HepG2 (cell line): ENCODE measurements at regions of chr10 and their contacts with region 1.

Region 1: GRCh38 chr10:28179006-28179742 is 123.7 kb downstream of the MPP7 start:
- DNase-seq: peak; percentile 46
- ATAC-seq: no peak
- H3K4me3 ChIP-seq: no peak overlapping the region
- H3K27ac ChIP-seq: no peak overlapping the region
- H3K4me1 ChIP-seq: peaks cover 27% of the 10 kb centered on the region
- H3K27me3 ChIP-seq: no peaks in the 10 kb centered on the region
- CTCF ChIP-seq: peak; percentile 63
- EP300 ChIP-seq: no peak
- POLR2A ChIP-seq: no peak
- RAD21 ChIP-seq: peak; percentile 19; the same call in 1 of the 2 replicates

Region 2: GRCh38 chr10:27558612-27559020 is 620.6 kb before region 1 on chr10:
- CTCF ChIA-PET with region 1: no interaction called
- POLR2A ChIA-PET with region 1: no interaction called
- in situ Hi-C with region 1: no loop called
- intact Hi-C with region 1: loop called (anchors 1 kb)
- DNase-seq: peak; percentile 68
- ATAC-seq: peak; percentile 69
- H3K4me3 ChIP-seq: no peak overlapping the region
- H3K27ac ChIP-seq: no peak overlapping the region
- H3K4me1 ChIP-seq: no peaks in the 10 kb centered on the region
- H3K27me3 ChIP-seq: no peaks in the 10 kb centered on the region
- CTCF ChIP-seq: peak; percentile 81
- EP300 ChIP-seq: no peak
- POLR2A ChIP-seq: no peak
- RAD21 ChIP-seq: peak; percentile 74

Region 3: GRCh38 chr10:27742195-27743011 is 436.8 kb before region 1 on chr10:
- CTCF ChIA-PET with region 1: interaction called, 14 read pairs
- POLR2A ChIA-PET with region 1: no interaction called
- in situ Hi-C with region 1: loop called (anchors 5 kb)
- intact Hi-C with region 1: loop called (anchors 1 kb)
- DNase-seq: peak; percentile 41
- ATAC-seq: peak; percentile 93
- H3K4me3 ChIP-seq: peak overlapping the region; percentile 61 to 79 (median 75)
- H3K27ac ChIP-seq: no peak overlapping the region
- H3K4me1 ChIP-seq: peaks cover 20% of the 10 kb centered on the region
- H3K27me3 ChIP-seq: peaks cover 8 to 36% of the 10 kb centered on the region in 2 experiments
- CTCF ChIP-seq: peak; percentile 80
- EP300 ChIP-seq: no peak
- POLR2A ChIP-seq: no peak
- RAD21 ChIP-seq: peak; percentile 85

Region 4: DNA sequence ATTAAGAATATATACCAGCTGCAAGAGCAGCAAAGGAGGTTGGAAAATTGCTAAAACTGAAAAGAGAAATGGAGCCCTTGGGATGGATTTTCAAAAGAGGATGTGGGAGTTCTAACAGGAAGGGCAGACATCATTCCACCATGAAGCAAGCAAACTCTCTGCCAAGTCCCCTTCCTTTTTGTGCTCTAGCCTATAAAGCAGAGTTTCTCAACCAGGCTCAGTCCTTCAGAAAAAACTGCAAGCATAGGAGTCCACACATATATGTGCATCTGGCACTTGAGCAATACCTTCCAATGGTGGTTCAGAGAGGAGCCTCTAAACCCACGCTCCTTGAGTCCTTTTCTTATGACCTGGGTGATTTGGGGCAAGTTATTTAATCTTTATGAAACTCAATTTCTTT is 335.0 kb before region 1 on chr10:
- CTCF ChIA-PET with region 1: no interaction called
- POLR2A ChIA-PET with region 1: no interaction called
- in situ Hi-C with region 1: no loop called
- intact Hi-C with region 1: no loop called
- DNase-seq: no peak
- ATAC-seq: no peak
- H3K4me3 ChIP-seq: no peak overlapping the region
- H3K27ac ChIP-seq: no peak overlapping the region
- H3K4me1 ChIP-seq: no peaks in the 10 kb centered on the region
- H3K27me3 ChIP-seq: no peaks in the 10 kb centered on the region
- CTCF ChIP-seq: no peak
- EP300 ChIP-seq: no peak
- POLR2A ChIP-seq: no peak
- RAD21 ChIP-seq: no peak

Region 5: DNA sequence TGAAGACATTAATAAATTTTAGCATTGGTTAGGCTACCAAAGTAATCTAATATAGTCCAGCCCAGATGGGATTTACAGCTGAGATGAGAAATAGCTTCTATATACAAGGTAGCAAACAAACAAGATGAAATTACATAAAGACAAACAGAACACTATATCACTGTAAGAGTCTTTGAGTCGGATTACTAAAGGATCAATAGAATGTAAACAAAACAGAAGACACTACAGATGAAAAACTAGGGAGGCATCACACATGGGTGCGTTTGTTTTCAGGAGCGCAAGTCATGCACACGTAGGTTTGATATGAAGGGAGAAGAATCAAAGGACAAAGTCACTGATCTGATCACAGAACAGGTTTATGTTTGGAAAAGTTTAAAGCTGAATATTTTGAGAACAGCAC is 97.2 kb after region 1 on chr10:
- CTCF ChIA-PET with region 1: no interaction called
- POLR2A ChIA-PET with region 1: no interaction called
- in situ Hi-C with region 1: no loop called
- intact Hi-C with region 1: no loop called
- DNase-seq: peak; percentile 12
- ATAC-seq: peak; percentile 33
- H3K4me3 ChIP-seq: no peak overlapping the region
- H3K27ac ChIP-seq: no peak overlapping the region
- H3K4me1 ChIP-seq: peaks cover 24% of the 10 kb centered on the region
- H3K27me3 ChIP-seq: no peaks in the 10 kb centered on the region
- CTCF ChIP-seq: no peak
- EP300 ChIP-seq: no peak
- POLR2A ChIP-seq: no peak
- RAD21 ChIP-seq: no peak